ENCODE measurements at regions of chr2 and their contacts with region 1.

Region 1: DNA sequence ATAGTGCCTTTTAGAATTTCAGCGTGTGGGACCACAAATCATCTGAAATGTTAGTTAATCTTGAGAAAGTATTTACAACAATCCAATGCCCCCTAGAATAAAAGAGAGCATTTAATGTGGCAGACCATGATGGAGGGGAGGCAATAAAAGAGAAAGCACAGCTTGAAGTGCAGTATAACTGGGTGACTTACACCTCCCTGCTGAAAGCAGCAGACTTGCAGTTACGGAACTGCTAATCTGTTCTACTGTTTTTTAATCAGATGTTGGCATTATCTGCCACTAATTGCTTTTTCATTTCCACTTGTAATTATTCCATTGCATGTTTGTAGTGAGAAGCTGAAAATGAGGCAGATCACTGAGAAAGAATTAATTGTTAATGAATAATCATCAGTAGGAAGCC is 130.5 kb upstream of the ITGA4 start:
- DNase-seq: no peak
- CTCF ChIP-seq: no peak

Region 2: GRCh38 chr2:181312515-181312927 is 14.1 kb before region 1 on chr2:
- CTCF ChIA-PET with region 1: interaction called, 15 read pairs
- POLR2A ChIA-PET with region 1: no interaction called
- DNase-seq: peak; percentile 35
- CTCF ChIP-seq: no peak

Measured in GM10248 (cell line).